ENCODE measurements at regions of chr1 and their contacts with region 1.

Region 1: GRCh38 chr1:89804642-89805237 is 16.1 kb upstream of the LRRC8D start:
- DNase-seq: peak; percentile 75
- H3K4me3 ChIP-seq: peak overlapping the region in 1 of 2 experiments; percentile 24; a peak in 1 of 4 replicates
- H3K27ac ChIP-seq: no peak overlapping the region
- H3K4me1 ChIP-seq: no peaks in the 10 kb centered on the region; a peak in 1 of 4 replicates
- H3K27me3 ChIP-seq: no peaks in the 10 kb centered on the region
- CTCF ChIP-seq: peak; percentile 95
- EP300 ChIP-seq: no peak
- RAD21 ChIP-seq: peak; percentile 96

Region 2: GRCh38 chr1:89609781-89610456 is 194.8 kb before region 1 on chr1:
- CTCF ChIA-PET with region 1: no interaction called
- POLR2A ChIA-PET with region 1: no interaction called
- DNase-seq: no peak
- H3K4me3 ChIP-seq: no peak overlapping the region
- H3K27ac ChIP-seq: no peak overlapping the region; a peak in 1 of 4 replicates
- H3K4me1 ChIP-seq: peaks cover 0 to 13% of the 10 kb centered on the region in 2 experiments; a peak in 3 of 4 replicates
- H3K27me3 ChIP-seq: no peaks in the 10 kb centered on the region
- CTCF ChIP-seq: no peak
- EP300 ChIP-seq: no peak
- RAD21 ChIP-seq: no peak

Region 3: GRCh38 chr1:89739013-89739843 is 65.5 kb before region 1 on chr1:
- CTCF ChIA-PET with region 1: no interaction called
- POLR2A ChIA-PET with region 1: no interaction called
- DNase-seq: no peak
- H3K4me3 ChIP-seq: no peak overlapping the region
- H3K27ac ChIP-seq: no peak overlapping the region; a peak in 1 of 4 replicates
- H3K4me1 ChIP-seq: peaks cover 0 to 12% of the 10 kb centered on the region in 2 experiments; a peak in 1 of 4 replicates
- H3K27me3 ChIP-seq: no peaks in the 10 kb centered on the region
- CTCF ChIP-seq: no peak
- EP300 ChIP-seq: no peak
- RAD21 ChIP-seq: no peak

Region 4: GRCh38 chr1:89791064-89791726 is 13.5 kb before region 1 on chr1:
- CTCF ChIA-PET with region 1: interaction called, 12 read pairs
- POLR2A ChIA-PET with region 1: no interaction called
- DNase-seq: no peak
- H3K4me3 ChIP-seq: no peak overlapping the region
- H3K27ac ChIP-seq: peak overlapping the region in 1 of 2 experiments; percentile 18; a peak in 1 of 4 replicates
- H3K4me1 ChIP-seq: peaks cover 0 to 10% of the 10 kb centered on the region in 2 experiments; a peak in 1 of 4 replicates
- H3K27me3 ChIP-seq: no peaks in the 10 kb centered on the region
- CTCF ChIP-seq: no peak
- EP300 ChIP-seq: no peak
- RAD21 ChIP-seq: no peak

Region 5: GRCh38 chr1:89820422-89821321 is 15.9 kb after region 1 on chr1 and contains the start of gene LRRC8D:
- CTCF ChIA-PET with region 1: interaction called, 24 read pairs
- POLR2A ChIA-PET with region 1: no interaction called
- DNase-seq: peak; percentile 96
- H3K4me3 ChIP-seq: peak within 1 kb of the TSS; percentile 77 to 94
- H3K27ac ChIP-seq: peak within 1 kb of the TSS; percentile 19 to 74; a peak in 3 of 4 replicates
- H3K4me1 ChIP-seq: peaks cover 4 to 15% of the 10 kb centered on the region in 2 experiments; a peak in 3 of 4 replicates
- H3K27me3 ChIP-seq: no peaks in the 10 kb centered on the region
- CTCF ChIP-seq: no peak
- EP300 ChIP-seq: no peak; a peak in 1 of 4 replicates
- RAD21 ChIP-seq: no peak
- polyA plus RNA-seq, gene LRRC8D: 15.0 and 21.5 TPM in 2 replicates

Region 6: GRCh38 chr1:89987170-89987819 is 182.6 kb after region 1 on chr1:
- CTCF ChIA-PET with region 1: interaction called, 42 read pairs
- POLR2A ChIA-PET with region 1: no interaction called
- DNase-seq: peak; percentile 81
- H3K4me3 ChIP-seq: no peak overlapping the region; a peak in 1 of 4 replicates
- H3K27ac ChIP-seq: no peak overlapping the region
- H3K4me1 ChIP-seq: peaks cover 0 to 5% of the 10 kb centered on the region in 2 experiments; a peak in 3 of 4 replicates
- H3K27me3 ChIP-seq: no peaks in the 10 kb centered on the region
- CTCF ChIP-seq: peak; percentile 90
- EP300 ChIP-seq: no peak
- RAD21 ChIP-seq: peak; percentile 97

Measured in SK-N-SH (cell line).